ENCODE measurements at regions of chr6 and their contacts with region 1.

Region 1: GRCh38 chr6:46745973-46746372 is 760 bp upstream of the ANKRD66 start:
- DNase-seq: no peak
- ATAC-seq: no peak
- H3K4me3 ChIP-seq: no peak overlapping the region
- H3K27ac ChIP-seq: no peak overlapping the region
- H3K4me1 ChIP-seq: no peaks in the 10 kb centered on the region
- H3K27me3 ChIP-seq: no peaks in the 10 kb centered on the region
- CTCF ChIP-seq: no peak

Region 2: DNA sequence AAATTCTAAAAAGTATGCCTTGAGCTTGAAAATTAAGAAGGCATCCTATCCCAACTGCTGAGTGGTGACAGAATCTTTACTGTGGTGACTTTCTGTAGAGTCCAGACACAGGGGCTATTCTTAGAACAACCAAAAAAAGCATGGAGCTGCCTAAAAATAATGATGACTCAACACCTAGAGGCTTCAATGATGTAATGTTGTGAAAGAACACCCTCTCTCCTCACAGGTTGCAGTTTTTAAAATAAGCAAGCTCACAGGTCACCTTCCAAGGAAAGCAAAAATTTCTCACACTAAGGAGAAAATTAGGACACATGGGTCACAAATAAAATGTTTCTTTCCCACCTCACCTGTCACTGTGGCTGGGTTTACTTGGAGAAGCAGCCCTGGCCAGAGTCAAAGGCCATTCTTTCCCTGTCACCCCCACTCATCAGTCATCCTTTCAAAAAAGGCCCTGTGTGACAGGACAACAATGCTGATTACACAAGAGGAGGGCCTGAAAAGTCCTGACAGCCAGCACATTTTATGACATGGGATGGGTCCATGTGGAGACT is 308.2 kb before region 1 on chr6:
- CTCF ChIA-PET with region 1: no interaction called
- POLR2A ChIA-PET with region 1: no interaction called
- intact Hi-C with region 1: no loop called
- DNase-seq: no peak
- ATAC-seq: no peak
- H3K4me3 ChIP-seq: no peak overlapping the region
- H3K27ac ChIP-seq: no peak overlapping the region
- H3K4me1 ChIP-seq: no peaks in the 10 kb centered on the region
- H3K27me3 ChIP-seq: peaks cover 52% of the 10 kb centered on the region
- CTCF ChIP-seq: no peak

Region 3: DNA sequence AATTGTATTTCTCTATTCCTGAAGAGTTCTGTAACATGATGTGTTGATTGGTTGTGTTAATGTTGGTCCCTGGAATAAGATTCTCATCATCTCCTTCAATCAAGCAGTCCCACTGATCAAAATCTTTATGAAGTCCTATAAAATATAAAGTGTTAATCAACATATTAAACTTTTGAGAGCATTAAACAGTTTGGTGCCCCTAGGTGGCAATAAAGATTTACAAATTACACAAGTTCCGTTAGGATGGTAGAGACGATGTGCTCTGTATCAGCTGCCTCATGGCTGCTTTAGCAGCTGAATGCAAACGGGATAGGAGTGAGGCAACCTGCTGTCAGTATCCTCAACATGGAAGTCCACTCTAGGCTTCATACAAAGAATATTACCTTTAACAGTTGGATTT is 41.4 kb before region 1 on chr6:
- CTCF ChIA-PET with region 1: no interaction called
- POLR2A ChIA-PET with region 1: interaction called, 13 read pairs
- intact Hi-C with region 1: no loop called
- DNase-seq: peak; percentile 80
- ATAC-seq: peak; percentile 90
- H3K4me3 ChIP-seq: no peak overlapping the region
- H3K27ac ChIP-seq: no peak overlapping the region
- H3K4me1 ChIP-seq: peaks cover 10% of the 10 kb centered on the region
- H3K27me3 ChIP-seq: no peaks in the 10 kb centered on the region
- CTCF ChIP-seq: peak; percentile 76

Region 4: DNA sequence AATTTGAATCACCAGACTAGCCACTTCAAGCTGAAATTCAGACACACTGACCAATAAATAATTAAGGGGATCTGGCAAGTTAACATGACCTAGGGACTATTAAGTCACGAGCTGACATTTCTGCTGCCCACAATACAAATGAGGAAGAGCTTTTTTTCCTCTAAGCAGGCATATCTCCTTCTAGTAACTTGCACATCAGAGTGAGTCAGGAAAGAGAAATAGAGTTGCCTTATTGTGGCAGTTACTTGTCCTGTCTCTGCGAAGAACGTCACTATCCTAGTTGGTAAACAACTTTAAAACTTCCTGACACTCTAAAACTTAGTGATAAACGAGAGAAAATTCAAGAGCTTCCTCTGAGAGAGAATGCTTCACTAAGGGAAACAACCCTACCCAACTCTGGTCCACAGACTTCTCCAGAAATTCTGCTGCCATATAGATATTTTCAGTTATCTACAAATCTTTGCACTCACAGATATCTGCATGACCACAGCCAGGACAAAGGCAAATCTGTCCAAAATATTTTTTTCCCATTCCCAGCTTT is 15.0 kb before region 1 on chr6:
- CTCF ChIA-PET with region 1: no interaction called
- POLR2A ChIA-PET with region 1: no interaction called
- intact Hi-C with region 1: no loop called
- DNase-seq: no peak
- ATAC-seq: no peak
- H3K4me3 ChIP-seq: no peak overlapping the region
- H3K27ac ChIP-seq: no peak overlapping the region
- H3K4me1 ChIP-seq: peaks cover 24% of the 10 kb centered on the region
- H3K27me3 ChIP-seq: no peaks in the 10 kb centered on the region
- CTCF ChIP-seq: no peak